PC-9 (cell line): ENCODE measurements at regions of chr19 and their contacts with region 1.

Region 1: GRCh38 chr19:6862673-6863078 is 24.7 kb upstream of the ADGRE1 start:
- DNase-seq: peak; percentile 75 to 84
- H3K4me3 ChIP-seq: peak overlapping the region; percentile 38; the same call in 1 of the 2 replicates
- H3K27ac ChIP-seq: 0 out of 2 replicates have a peak overlapping the region, but pooled peaks have one; percentile 16
- H3K4me1 ChIP-seq: peaks cover 16% of the 10 kb centered on the region
- H3K27me3 ChIP-seq: no peaks in the 10 kb centered on the region
- CTCF ChIP-seq: peak; percentile 86

Region 2: GRCh38 chr19:6460101-6460853 is 402.4 kb before region 1 on chr19:
- CTCF ChIA-PET with region 1: no interaction called
- POLR2A ChIA-PET with region 1: no interaction called
- intact Hi-C with region 1: loop called (anchors 5 kb)
- DNase-seq: peak; percentile 93 to 94
- H3K4me3 ChIP-seq: peak overlapping the region; percentile 68
- H3K27ac ChIP-seq: peak overlapping the region; percentile 88
- H3K4me1 ChIP-seq: peaks cover 2% of the 10 kb centered on the region
- H3K27me3 ChIP-seq: no peaks in the 10 kb centered on the region
- CTCF ChIP-seq: peak; percentile 63

Region 3: DNA sequence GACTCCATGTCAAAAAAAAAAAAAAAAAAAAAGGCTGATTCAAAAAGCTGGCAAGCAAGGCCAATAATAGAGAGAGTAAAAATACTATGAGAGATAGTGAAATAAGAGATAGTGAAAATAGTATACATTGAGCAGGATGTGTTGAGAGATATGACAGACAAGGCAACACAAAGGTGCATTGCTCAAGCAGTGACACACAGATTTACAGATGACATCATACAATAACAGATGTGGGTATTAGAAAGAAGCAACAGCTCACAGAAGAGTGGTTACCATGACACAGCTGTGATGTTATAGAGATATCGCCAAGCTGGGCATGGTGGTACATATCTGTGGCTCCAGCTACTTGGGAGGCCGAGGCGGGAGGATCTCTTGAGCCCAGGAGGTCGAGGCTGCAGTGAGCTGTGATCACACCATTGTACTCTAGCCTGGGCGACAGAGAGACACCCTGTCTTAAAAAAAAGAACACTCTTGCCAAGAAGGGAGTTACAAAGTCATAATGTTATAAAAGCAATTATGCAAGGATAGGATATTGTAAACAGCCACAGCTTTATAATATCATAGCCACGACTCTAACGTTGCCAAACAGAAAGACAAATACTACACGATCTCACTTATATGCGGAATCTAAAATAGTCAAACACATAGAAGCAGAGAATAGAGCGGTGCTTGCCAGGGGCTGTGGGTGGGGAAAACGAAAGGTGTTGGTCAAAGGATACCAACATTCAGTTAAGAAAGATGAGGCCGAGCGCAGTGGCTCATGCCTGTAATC is 321.6 kb before region 1 on chr19:
- CTCF ChIA-PET with region 1: no interaction called
- POLR2A ChIA-PET with region 1: interaction called, 11 read pairs
- intact Hi-C with region 1: no loop called
- DNase-seq: no peak
- H3K4me3 ChIP-seq: no peak overlapping the region
- H3K27ac ChIP-seq: no peak overlapping the region
- H3K4me1 ChIP-seq: peaks cover 13% of the 10 kb centered on the region
- H3K27me3 ChIP-seq: no peaks in the 10 kb centered on the region
- CTCF ChIP-seq: no peak

Region 4: GRCh38 chr19:6767357-6768235 is 95.1 kb before region 1 on chr19 and contains the start of gene SH2D3A:
- CTCF ChIA-PET with region 1: no interaction called
- POLR2A ChIA-PET with region 1: no interaction called
- intact Hi-C with region 1: loop called (anchors 1 kb)
- DNase-seq: peak; percentile 81 to 93
- H3K4me3 ChIP-seq: peak within 1 kb of the TSS; percentile 74
- H3K27ac ChIP-seq: peak within 1 kb of the TSS; percentile 98
- H3K4me1 ChIP-seq: peaks cover 26% of the 10 kb centered on the region
- H3K27me3 ChIP-seq: no peaks in the 10 kb centered on the region
- CTCF ChIP-seq: no peak
- total RNA-seq, gene SH2D3A: 43.3 and 43.4 TPM in 2 replicates

Region 5: GRCh38 chr19:6790194-6791128 is 72.2 kb before region 1 on chr19:
- CTCF ChIA-PET with region 1: no interaction called
- POLR2A ChIA-PET with region 1: no interaction called
- intact Hi-C with region 1: no loop called
- DNase-seq: no peak
- H3K4me3 ChIP-seq: no peak overlapping the region
- H3K27ac ChIP-seq: no peak overlapping the region
- H3K4me1 ChIP-seq: peaks cover 6% of the 10 kb centered on the region; the same call in 1 of the 2 replicates
- H3K27me3 ChIP-seq: no peaks in the 10 kb centered on the region
- CTCF ChIP-seq: no peak

Region 6: GRCh38 chr19:6914321-6914720 is 51.6 kb after region 1 on chr19:
- CTCF ChIA-PET with region 1: no interaction called
- POLR2A ChIA-PET with region 1: no interaction called
- intact Hi-C with region 1: no loop called
- DNase-seq: no peak
- H3K4me3 ChIP-seq: no peak overlapping the region
- H3K27ac ChIP-seq: no peak overlapping the region
- H3K4me1 ChIP-seq: no peaks in the 10 kb centered on the region
- H3K27me3 ChIP-seq: 0 out of 2 replicates have a peak, but pooled peaks cover 4% of the 10 kb centered on the region
- CTCF ChIP-seq: no peak